ENCODE measurements at regions of chr4 and their contacts with region 1.

Region 1: DNA sequence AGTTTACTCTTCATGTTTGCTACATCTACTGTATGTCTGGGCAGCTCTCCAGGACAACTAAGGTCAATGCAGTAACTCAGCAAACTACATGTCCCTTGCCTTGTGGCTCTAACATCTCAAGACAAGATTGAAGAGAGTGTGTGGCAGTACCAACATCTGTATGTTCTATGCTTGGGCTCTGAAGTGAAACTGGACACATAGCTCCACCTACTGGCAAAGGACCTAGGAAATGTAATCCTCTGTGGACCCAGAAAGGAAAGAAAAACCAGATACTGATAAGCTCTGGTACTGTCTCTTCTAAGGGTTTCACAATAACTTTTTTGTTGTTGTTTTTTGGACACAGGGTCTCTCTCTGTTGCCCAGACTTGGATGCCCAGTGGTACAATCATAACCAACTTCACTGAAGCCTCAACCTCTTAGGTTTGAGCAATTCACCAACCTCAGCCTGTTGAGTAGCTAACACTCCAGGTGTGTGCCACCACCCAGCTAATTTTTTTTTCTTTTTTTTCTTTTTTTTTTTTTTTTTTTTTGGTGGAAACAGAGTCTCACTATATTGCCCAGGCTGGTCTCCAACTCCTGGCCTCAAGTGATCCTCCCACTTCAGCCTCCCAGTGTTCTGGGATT is 64.1 kb downstream of the QDPR start:
- DNase-seq: peak in 1 of 3 donors; percentile 53
- ATAC-seq: peak; percentile 96 to 99 (median 98)
- H3K4me3 ChIP-seq: no peak overlapping the region
- H3K27ac ChIP-seq: no peak overlapping the region
- H3K4me1 ChIP-seq: peaks cover 0 to 11% (median 0%) of the 10 kb centered on the region in 4 donors
- H3K27me3 ChIP-seq: no peaks in the 10 kb centered on the region
- CTCF ChIP-seq: peak; percentile 66 to 79 (median 71)
- POLR2A ChIP-seq: no peak

Region 2: GRCh38 chr4:17197070-17197469 is 250.7 kb before region 1 on chr4:
- intact Hi-C with region 1: no loop called
- DNase-seq: peak in 1 of 3 donors; percentile 63
- ATAC-seq: peak in 3 of 4 donors; percentile 63 to 84 (median 76)
- H3K4me3 ChIP-seq: no peak overlapping the region
- H3K27ac ChIP-seq: no peak overlapping the region
- H3K4me1 ChIP-seq: no peaks in the 10 kb centered on the region
- H3K27me3 ChIP-seq: no peaks in the 10 kb centered on the region
- CTCF ChIP-seq: no peak
- POLR2A ChIP-seq: no peak

Region 3: GRCh38 chr4:17356926-17357325 is 90.9 kb before region 1 on chr4:
- intact Hi-C with region 1: loop called in 1 of 2 experiments (anchors 10 kb)
- DNase-seq: no peak
- ATAC-seq: no peak
- H3K4me3 ChIP-seq: no peak overlapping the region
- H3K27ac ChIP-seq: no peak overlapping the region
- H3K4me1 ChIP-seq: no peaks in the 10 kb centered on the region
- H3K27me3 ChIP-seq: no peaks in the 10 kb centered on the region
- CTCF ChIP-seq: no peak
- POLR2A ChIP-seq: no peak

Measured in right lobe of liver (tissue), 6 donors.